Posterior cingulate gyrus (tissue), 11 donors: ENCODE measurements at regions of chr11 and their contacts with region 1.

Region 1: DNA sequence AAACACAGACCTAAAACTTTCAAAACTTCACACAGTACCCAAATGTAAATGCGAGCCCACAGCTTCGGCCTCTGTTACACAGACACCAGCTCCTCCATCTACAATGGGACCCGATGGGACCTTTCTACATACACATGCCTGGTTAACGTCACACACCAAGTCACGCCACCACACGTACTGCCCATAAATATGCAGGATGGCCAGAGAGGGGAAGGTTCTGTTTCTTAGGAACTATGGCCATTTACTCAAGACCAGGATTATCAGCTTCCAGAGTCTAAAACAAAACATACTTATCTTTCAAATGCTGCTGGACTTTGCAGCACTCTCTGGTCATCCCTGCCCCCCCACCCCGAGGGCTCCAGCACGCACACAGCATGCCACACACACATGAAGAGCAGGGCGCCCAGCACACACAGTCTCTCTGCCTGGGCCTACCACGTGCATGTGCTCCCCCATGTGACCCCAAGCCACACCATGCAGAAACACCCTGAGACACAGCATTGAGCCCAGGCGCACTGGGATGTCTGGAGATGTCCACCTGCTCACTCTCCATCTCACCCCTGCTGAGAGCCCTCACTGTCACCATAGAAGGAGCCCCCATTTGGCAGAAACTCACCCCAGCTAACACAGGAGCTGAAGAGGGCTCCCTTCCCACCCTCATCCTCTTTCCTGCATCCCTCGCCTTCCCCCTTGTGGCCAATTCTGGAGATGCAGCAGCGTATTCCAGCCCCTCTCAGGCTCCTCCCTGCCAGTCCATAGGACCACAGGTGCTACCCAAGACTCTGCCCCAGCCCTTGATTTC is 61.8 kb downstream of the SLC22A12 start:
- DNase-seq: peak; percentile 66 to 97 (median 90)

Region 2: DNA sequence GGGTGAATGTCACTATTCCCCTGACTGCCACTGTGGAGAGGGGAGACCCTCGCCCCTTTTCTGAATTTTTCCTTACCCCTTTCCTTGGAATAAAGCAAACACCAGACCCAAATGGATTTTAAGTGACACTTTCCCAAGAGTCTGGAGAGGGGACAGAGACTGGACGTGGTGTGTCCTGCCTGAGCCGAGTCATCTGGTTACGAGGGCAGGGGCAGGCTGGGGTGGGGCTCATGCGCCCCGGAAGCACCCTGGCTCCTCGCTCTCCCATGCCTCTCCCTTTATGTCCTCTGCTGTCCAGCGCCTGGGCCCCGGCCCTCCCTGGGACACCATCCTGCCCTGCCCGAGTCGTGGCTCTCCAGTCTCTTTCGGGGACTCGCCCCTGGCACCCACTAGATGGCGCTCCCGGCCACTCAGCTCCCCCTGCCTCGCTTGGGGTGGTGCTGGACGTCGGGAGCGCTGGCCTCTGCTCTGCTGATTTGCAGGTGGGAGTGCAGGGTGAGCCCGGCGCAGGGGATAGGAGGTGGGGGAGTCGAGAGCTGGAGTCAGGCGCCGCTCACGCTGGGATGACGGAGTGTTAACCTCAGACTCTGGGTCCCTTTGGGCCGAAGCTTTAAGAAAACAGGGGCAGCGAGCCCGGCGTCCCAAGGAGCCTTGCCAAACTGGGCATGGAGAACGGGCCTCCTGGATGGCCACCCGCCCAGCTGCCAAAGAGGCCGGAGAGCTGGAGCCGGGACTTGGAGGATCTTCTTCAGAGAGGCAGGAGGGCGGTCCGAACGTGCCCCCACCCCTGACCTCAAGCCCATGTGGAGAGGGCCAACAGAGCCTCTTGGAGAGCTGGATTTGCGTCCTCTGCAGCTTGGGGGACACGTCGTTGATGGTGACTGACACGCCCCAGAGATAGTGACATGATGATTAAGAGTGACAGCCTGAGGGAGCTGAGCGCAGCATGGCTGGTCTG is 203.9 kb before region 1 on chr11:
- intact Hi-C with region 1: loop called (anchors 1 kb)
- DNase-seq: peak; percentile 60 to 98 (median 84)

Region 3: DNA sequence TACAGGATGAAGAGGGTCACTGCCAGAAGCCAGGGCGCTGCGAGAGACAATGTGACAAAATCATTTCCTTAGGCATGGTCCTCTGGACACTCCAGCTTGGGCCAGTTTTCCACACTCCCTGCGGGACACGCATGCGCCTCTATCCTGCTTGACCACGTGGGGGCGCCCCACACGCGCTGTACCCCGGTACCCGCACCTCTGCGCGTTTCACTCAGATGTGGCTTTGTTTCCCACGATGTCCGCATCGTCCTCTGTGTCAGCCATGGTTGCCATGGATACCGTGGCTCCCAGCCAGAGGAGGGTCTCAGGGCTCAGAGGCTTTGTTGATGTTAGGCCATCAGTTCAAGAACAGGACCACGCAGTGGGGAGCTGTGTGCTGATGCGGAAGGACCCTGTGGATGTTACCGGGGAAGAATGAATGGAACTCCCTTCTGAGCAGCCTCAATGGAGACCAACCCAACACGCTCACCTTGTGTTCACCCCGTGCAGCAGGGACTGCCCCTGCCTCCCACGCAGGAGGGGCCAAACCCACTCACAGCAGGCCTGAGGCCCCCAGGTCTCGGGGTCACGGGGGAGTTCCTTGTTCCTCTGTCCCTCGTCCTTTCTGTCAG is 162.9 kb before region 1 on chr11:
- intact Hi-C with region 1: loop called (anchors 5 kb)
- DNase-seq: peak; percentile 34 to 96 (median 71)

Region 4: GRCh38 chr11:64553551-64554201 is 99.1 kb before region 1 on chr11:
- intact Hi-C with region 1: loop called (anchors 1 kb)
- DNase-seq: peak in 9 of 10 donors; percentile 53 to 94 (median 78)

Region 5: DNA sequence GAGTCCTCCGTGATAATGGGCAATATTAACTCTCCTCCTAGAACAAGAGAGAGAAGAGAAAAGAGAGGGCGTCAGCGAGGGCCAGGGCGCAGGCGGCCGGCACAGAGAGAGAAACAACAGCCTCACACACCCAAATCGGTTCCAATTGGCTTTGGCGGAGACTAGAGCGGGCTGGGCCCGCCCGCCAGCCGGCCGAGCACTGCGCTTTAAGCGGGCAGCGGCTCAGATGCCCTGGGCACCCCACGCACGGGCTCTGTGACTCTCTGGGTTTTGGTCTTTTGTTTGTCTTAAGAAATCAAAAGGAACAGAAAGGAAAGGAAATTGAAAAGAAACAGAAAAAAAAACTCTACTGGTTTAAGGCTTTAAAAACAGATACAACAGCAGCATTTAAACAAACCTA is 44.7 kb before region 1 on chr11:
- intact Hi-C with region 1: no loop called
- DNase-seq: peak in 7 of 10 donors; percentile 30 to 92 (median 56)

Region 6: DNA sequence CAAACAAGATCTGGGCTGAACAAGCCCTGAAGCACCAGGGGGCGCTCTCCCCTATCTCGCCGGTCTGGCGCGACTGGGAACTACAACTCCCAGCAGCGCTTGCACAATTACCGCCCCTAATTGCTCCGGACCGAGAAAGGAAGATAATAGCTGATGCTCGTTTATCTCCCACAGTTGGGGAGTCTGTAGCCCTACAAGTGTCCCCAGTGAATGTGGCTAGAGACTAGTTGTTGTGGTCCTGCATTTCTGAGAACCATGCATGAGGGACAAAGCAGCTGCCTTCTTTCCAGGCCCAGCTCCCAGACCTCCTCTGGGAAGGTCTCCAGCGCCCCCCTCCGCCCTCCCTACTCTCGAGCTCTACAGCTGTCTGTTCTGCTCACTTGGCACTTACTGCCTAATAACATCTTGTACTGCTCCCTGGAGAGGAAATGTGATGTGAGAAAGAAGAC is 35.8 kb after region 1 on chr11:
- intact Hi-C with region 1: loop called (anchors 5 kb)
- DNase-seq: peak; percentile 84 to 98 (median 92)

Region 7: DNA sequence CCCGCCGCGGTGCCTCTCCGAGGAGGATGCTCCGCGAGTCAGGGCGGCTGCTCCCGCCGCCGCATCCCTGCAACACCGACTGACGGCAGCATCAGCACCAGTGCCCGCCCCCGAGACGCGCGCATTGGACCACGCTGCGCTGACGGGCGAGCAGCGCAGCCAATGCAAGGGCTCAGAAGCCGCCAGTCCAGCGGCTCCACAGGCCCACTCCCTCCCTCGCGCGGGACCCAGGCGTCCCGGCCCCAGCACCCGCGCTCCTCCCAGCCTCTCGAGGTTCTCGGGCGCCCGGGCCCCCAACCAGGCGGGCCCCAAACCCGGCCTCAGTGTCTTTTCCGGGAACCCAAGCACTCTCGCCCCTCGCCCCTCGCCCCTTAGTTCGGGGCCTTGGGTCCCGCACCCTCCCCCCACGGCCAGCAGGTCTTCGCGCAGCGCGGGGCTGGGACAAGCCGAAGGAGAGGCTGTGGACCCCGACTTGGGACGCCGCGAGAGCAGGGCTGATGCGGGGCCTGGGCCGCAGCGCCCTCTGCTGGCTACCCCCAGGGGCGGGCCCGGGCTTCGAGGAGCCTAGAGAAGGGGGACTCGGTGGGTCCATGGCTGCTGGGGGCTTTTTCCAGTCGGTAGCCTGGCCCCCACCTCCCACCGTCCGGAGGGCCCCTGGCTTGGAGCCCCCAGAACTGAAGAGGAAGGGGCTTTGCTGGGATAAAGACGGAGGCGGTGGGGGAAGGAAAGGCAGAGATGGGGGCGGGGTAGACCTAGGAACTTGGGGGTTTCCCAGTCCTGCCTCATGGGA is 70.5 kb after region 1 on chr11 and contains the start of gene NRXN2:
- intact Hi-C with region 1: loop called (anchors 2 kb)
- DNase-seq: peak; percentile 91 to 100 (median 96)

Region 8: DNA sequence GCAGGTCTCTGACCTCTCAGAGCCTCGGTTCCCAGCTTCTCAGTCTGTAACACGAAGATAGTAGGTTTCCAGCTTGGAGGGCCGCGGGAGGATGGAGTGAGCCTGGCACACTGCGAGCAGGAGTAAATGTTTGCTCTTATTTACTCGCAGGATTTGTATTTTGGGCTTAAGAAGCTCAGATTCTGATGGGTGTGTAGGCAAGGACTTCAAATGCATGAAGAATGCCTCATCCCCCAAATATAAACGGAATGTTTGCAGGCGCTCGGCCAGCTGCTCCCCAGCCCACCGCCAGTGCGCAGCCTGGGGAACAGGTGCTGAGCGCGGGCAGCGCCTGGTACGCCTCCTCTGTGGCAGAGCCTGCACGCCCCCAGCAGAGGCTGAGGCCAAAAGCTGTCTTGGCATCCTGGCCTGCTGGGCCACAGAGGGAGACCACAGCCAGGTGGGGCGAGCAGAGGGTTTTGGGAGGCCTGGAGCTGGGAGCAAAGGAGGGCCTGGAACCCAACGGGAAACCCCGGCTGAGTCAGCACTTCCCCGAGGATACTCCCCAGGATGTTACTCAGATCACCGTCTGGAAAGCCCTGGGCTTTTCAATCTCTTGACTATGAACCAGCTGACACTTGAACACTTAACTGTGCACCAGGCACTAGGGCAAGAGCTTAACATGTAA is 216.2 kb after region 1 on chr11:
- intact Hi-C with region 1: no loop called
- DNase-seq: peak in 5 of 10 donors; percentile 23 to 93 (median 86)